SK-N-SH (cell line): ENCODE measurements at regions of chr9 and their contacts with region 1.

Region 1: GRCh38 chr9:127586537-127586936 is 25.5 kb upstream of the STXBP1 start:
- DNase-seq: peak; percentile 87
- H3K4me3 ChIP-seq: no peak overlapping the region; a peak in 1 of 4 replicates
- H3K27ac ChIP-seq: no peak overlapping the region
- H3K4me1 ChIP-seq: no peaks in the 10 kb centered on the region; a peak in 1 of 4 replicates
- H3K27me3 ChIP-seq: no peaks in the 10 kb centered on the region
- CTCF ChIP-seq: peak; percentile 87
- EP300 ChIP-seq: no peak
- RAD21 ChIP-seq: peak; percentile 93

Region 2: GRCh38 chr9:127092041-127092608 is 494.4 kb before region 1 on chr9:
- CTCF ChIA-PET with region 1: no interaction called
- POLR2A ChIA-PET with region 1: no interaction called
- DNase-seq: no peak
- H3K4me3 ChIP-seq: no peak overlapping the region
- H3K27ac ChIP-seq: no peak overlapping the region
- H3K4me1 ChIP-seq: no peaks in the 10 kb centered on the region; a peak in 1 of 4 replicates
- H3K27me3 ChIP-seq: no peaks in the 10 kb centered on the region
- CTCF ChIP-seq: no peak
- EP300 ChIP-seq: no peak
- RAD21 ChIP-seq: no peak

Region 3: DNA sequence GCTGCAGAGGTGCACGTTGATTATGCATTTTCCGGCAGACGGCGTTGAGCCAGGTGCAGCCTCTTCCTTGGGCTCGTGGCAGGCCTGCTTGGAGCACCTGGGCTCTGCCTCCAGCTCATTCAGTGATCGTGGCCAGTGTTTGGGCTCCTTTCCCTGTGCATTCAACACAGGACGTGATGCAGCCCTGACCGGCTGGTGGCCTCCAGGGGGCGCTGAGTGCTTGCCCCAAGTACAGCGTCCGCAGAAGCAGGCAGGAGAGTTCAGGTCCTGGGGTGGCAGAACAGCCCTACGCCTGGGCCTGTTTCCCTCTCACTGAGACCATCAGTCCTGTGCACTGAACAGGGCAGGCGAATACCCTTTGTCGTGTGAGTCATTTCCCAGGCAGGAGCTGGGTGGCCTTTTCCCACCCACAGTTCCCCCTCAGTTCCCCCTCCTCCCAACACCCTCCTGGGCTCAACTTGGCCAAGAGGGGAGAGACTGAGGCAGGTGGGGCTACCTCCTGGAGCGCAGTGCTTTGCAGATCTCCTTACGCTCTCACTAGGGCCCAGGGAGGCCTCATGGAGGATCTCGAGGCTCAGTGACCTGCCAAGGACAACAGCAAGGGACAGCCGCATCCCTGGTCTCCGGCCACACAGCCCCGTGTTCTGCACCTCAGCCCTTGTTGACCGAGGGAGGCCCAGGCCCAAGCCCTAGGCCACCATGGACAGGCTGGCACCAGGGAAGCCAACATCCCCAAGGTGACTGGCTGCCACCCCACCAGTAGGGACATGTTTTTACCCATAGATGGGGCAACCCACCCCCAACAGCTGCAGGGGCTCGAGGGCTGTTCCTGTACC is 82.4 kb before region 1 on chr9:
- CTCF ChIA-PET with region 1: interaction called, 277 read pairs
- POLR2A ChIA-PET with region 1: interaction called, 3 read pairs
- DNase-seq: peak; percentile 86
- H3K4me3 ChIP-seq: no peak overlapping the region; a peak in 1 of 4 replicates
- H3K27ac ChIP-seq: peak overlapping the region; percentile 4 to 59; a peak in 3 of 4 replicates
- H3K4me1 ChIP-seq: peaks cover 10 to 18% of the 10 kb centered on the region in 2 experiments; a peak in 2 of 4 replicates
- H3K27me3 ChIP-seq: no peaks in the 10 kb centered on the region
- CTCF ChIP-seq: peak; percentile 78
- EP300 ChIP-seq: no peak
- RAD21 ChIP-seq: peak; percentile 91

Region 4: DNA sequence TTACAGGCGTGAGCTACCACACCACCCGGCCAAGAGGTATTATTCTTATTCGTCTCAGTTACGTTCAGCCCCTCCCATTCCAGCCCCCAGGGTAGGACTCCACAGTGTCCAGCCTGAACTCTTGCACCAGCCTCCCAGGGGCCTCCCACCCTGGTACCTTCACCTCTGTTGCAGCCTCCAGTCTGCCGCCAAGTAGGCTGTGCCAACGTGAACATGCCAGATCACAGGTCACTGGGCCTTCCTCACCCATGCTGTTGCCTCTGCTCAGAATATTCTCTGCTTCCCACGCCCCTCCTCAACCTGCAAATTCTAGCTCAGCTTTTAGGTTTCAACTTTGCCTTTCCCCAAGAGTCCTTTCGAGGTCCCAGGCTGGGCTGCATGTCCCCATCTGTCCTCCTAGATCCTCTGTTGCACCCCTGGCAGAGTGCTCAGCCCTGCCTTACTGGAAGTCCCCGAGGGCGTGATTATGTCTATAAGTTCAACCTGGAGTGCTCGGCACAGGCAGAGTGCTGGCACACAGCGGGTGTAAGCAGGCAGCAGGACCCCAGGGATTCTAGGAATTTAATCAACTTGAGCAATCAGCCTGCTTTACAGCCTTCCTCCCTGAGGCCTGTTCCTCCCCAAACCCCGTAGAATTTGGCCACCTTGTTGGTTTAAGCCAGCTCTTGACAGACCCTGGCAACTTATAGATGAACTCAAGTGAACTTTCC is 12.5 kb after region 1 on chr9:
- CTCF ChIA-PET with region 1: interaction called, 15 read pairs
- POLR2A ChIA-PET with region 1: interaction called, 4 read pairs
- DNase-seq: no peak
- H3K4me3 ChIP-seq: no peak overlapping the region
- H3K27ac ChIP-seq: no peak overlapping the region
- H3K4me1 ChIP-seq: peaks cover 0 to 8% of the 10 kb centered on the region in 2 experiments; a peak in 1 of 4 replicates
- H3K27me3 ChIP-seq: no peaks in the 10 kb centered on the region
- CTCF ChIP-seq: no peak
- EP300 ChIP-seq: no peak
- RAD21 ChIP-seq: no peak

Region 5: GRCh38 chr9:127664667-127665507 is 78.3 kb after region 1 on chr9:
- CTCF ChIA-PET with region 1: interaction called, 12 read pairs
- POLR2A ChIA-PET with region 1: no interaction called
- DNase-seq: peak; percentile 76
- H3K4me3 ChIP-seq: no peak overlapping the region
- H3K27ac ChIP-seq: peak overlapping the region; percentile 52 to 97; a peak in 3 of 4 replicates
- H3K4me1 ChIP-seq: peaks cover 0 to 64% of the 10 kb centered on the region in 2 experiments; a peak in 2 of 4 replicates
- H3K27me3 ChIP-seq: no peaks in the 10 kb centered on the region
- CTCF ChIP-seq: no peak
- EP300 ChIP-seq: peak in 1 of 2 experiments; percentile 74; a peak in 2 of 4 replicates
- RAD21 ChIP-seq: no peak; the same call in 1 of the 2 replicates

Region 6: DNA sequence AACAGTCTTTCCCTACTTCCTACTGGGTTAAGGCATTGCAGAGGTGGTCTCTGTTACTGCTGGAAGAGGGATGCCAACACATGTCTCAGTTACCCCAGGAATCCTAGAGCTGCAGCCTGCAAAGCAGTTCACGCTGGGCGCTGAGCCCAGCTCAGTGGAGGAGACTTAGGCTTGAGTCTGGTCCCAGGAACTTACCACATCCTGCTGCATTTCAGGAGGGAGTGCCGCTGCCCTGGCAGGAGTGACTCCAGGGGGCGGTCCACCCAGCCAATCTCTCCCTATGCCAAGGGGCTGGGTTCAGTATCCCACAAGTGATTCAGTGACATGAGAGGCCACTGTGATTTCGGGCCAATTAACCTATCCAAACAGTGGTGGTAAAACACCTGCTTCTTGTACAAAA is 136.9 kb after region 1 on chr9:
- CTCF ChIA-PET with region 1: interaction called, 226 read pairs
- POLR2A ChIA-PET with region 1: no interaction called
- DNase-seq: no peak
- H3K4me3 ChIP-seq: no peak overlapping the region
- H3K27ac ChIP-seq: no peak overlapping the region
- H3K4me1 ChIP-seq: peaks cover 0 to 8% of the 10 kb centered on the region in 2 experiments; a peak in 1 of 4 replicates
- H3K27me3 ChIP-seq: no peaks in the 10 kb centered on the region
- CTCF ChIP-seq: no peak
- EP300 ChIP-seq: no peak
- RAD21 ChIP-seq: no peak